A549 (cell line): ENCODE measurements at regions of chr14 and their contacts with region 1.

Region 1: GRCh38 chr14:72516936-72517700 is 376.8 kb downstream of the DPF3 start:
- DNase-seq: peak in 1 of 2 experiments; percentile 68
- ATAC-seq: peak; percentile 52 to 85; a peak in 4 of 6 replicates
- H3K4me3 ChIP-seq: no peak overlapping the region
- H3K27ac ChIP-seq: no peak overlapping the region
- H3K4me1 ChIP-seq: no peaks in the 10 kb centered on the region
- CTCF ChIP-seq: peak; percentile 86
- EP300 ChIP-seq: no peak
- POLR2A ChIP-seq: no peak
- RAD21 ChIP-seq: peak; percentile 92 to 93

Region 2: GRCh38 chr14:72256056-72256455 is 261.1 kb before region 1 on chr14:
- CTCF ChIA-PET with region 1: no interaction called
- POLR2A ChIA-PET with region 1: no interaction called
- DNase-seq: no peak
- ATAC-seq: no peak
- H3K4me3 ChIP-seq: no peak overlapping the region
- H3K27ac ChIP-seq: no peak overlapping the region
- H3K4me1 ChIP-seq: no peaks in the 10 kb centered on the region
- CTCF ChIP-seq: no peak
- EP300 ChIP-seq: no peak
- POLR2A ChIP-seq: no peak
- RAD21 ChIP-seq: no peak

Region 3: DNA sequence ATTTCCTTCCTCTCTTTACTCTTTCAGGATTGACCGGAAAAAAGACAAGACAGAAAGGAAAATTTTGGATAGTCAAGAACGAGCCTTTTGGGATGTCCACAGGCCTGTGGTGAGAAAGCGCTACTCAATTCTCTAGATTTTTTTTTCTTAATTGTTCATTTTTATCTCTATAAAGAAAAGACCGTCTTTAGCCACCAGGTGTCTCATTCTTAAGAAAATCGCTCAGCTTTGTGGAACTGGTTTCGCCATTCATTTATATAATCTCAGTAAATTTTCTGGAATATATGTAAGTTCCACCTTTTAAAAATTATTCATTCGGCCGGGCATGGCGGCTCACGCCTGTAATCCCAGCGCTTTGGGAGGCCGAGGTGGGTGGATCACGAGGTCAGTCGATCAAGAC is 44.3 kb before region 1 on chr14:
- CTCF ChIA-PET with region 1: interaction called, 11 read pairs
- POLR2A ChIA-PET with region 1: no interaction called
- DNase-seq: peak in 1 of 2 experiments; percentile 19
- ATAC-seq: peak in 1 of 2 experiments; percentile 53; a peak in 3 of 6 replicates
- H3K4me3 ChIP-seq: no peak overlapping the region
- H3K27ac ChIP-seq: no peak overlapping the region
- H3K4me1 ChIP-seq: no peaks in the 10 kb centered on the region
- CTCF ChIP-seq: no peak
- EP300 ChIP-seq: no peak
- POLR2A ChIP-seq: no peak
- RAD21 ChIP-seq: no peak

Region 4: GRCh38 chr14:72503696-72504368 is 13.3 kb before region 1 on chr14:
- CTCF ChIA-PET with region 1: interaction called, 71 read pairs
- POLR2A ChIA-PET with region 1: no interaction called
- DNase-seq: no peak
- ATAC-seq: no peak
- H3K4me3 ChIP-seq: no peak overlapping the region
- H3K27ac ChIP-seq: no peak overlapping the region
- H3K4me1 ChIP-seq: no peaks in the 10 kb centered on the region
- CTCF ChIP-seq: no peak
- EP300 ChIP-seq: no peak
- POLR2A ChIP-seq: no peak
- RAD21 ChIP-seq: no peak

Region 5: DNA sequence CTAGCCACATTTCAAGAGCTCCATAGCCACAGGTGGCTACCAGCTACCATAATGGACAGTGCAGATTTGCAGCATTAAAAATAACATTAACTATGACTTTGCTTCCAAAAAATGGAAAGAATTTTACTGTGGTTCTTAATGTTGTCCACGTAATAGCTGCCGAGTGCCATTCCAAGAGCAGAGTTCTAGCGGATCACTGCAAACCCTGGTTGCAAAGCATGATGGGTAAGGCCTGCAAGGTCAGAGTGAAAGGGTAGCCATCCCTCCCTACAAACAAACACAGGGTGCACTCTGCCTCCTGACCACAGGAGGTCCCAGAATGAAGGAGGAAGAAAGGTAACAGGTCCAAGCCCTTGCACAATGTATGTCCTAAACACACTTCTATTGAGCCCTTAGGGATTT is 219.2 kb after region 1 on chr14:
- CTCF ChIA-PET with region 1: no interaction called
- POLR2A ChIA-PET with region 1: no interaction called
- DNase-seq: peak in 1 of 2 experiments; percentile 31
- ATAC-seq: peak in 1 of 2 experiments; percentile 65; a peak in 3 of 6 replicates
- H3K4me3 ChIP-seq: no peak overlapping the region
- H3K27ac ChIP-seq: no peak overlapping the region
- H3K4me1 ChIP-seq: no peaks in the 10 kb centered on the region
- CTCF ChIP-seq: no peak
- EP300 ChIP-seq: no peak
- POLR2A ChIP-seq: no peak
- RAD21 ChIP-seq: no peak

Region 6: DNA sequence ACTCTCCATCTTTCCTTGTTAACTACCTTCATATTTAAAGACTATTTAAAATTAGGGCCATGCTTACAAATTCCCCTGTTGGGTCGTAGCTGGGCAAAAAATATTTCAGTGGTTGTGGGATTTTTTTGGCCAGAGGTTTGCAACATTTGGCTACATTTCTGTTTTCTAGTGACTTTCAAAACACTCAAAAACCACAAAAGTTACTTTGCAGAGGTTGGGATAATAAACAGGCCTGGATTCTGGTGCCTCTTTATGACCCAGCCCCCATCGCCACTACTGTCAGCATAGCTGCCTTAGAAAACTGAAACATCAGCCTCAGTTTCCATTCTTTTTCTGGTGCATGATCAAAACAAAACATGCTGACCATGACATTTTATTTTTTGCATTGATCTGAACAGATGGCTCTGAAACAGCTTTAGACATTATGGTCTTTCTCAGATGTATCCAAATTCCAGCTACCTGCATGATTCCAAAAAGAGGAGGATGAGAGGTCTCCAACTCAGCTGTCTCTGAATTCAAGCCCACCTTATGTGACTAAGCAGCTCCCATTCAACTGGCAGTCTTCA is 371.6 kb after region 1 on chr14:
- CTCF ChIA-PET with region 1: interaction called, 41 read pairs
- POLR2A ChIA-PET with region 1: interaction called, 3 read pairs
- DNase-seq: no peak
- ATAC-seq: no peak
- H3K4me3 ChIP-seq: no peak overlapping the region
- H3K27ac ChIP-seq: no peak overlapping the region
- H3K4me1 ChIP-seq: peaks cover 8% of the 10 kb centered on the region; the same call in 2 of the 3 replicates
- CTCF ChIP-seq: no peak
- EP300 ChIP-seq: no peak
- POLR2A ChIP-seq: no peak
- RAD21 ChIP-seq: no peak

Region 7: GRCh38 chr14:72916177-72916576 is 399.1 kb after region 1 on chr14:
- CTCF ChIA-PET with region 1: interaction called, 13 read pairs
- POLR2A ChIA-PET with region 1: interaction called, 3 read pairs
- DNase-seq: peak in 1 of 2 experiments; percentile 25
- ATAC-seq: peak in 1 of 2 experiments; percentile 65; a peak in 3 of 6 replicates
- H3K4me3 ChIP-seq: no peak overlapping the region
- H3K27ac ChIP-seq: no peak overlapping the region
- H3K4me1 ChIP-seq: peaks cover 8% of the 10 kb centered on the region; the same call in 1 of the 3 replicates
- CTCF ChIP-seq: no peak
- EP300 ChIP-seq: no peak
- POLR2A ChIP-seq: no peak
- RAD21 ChIP-seq: no peak

Region 8: DNA sequence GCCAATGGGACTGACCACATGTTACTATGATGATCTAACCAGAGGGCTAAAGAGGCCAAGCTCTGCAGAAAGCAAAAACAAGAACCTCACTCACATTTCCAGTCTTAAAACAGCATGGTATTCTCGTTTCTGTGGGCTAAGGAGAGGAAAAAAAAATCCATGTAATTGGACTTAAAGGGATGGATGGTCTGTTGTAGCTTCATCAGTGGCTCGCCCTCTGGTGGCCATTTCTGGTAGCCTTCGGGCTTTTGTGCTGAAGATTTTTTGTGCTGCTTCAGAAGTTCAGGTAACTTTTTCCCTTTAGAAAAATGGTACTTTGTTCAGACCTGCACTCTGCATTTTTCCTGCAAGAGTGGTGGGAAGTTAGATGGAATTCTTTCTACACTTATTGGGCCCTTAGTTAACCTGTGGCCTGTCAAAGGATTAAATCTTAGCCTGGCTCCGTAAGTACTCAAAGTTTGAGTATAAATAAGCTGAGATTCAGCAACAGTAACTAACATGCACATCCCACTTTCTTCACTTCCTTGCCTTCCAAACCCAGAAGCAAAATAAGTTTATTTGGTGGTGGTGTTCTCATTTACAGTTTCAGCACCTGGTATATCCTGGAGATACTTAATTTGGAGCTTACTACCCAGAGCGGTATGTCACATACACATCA is 431.5 kb after region 1 on chr14:
- CTCF ChIA-PET with region 1: interaction called, 201 read pairs
- POLR2A ChIA-PET with region 1: interaction called, 6 read pairs
- DNase-seq: peak; percentile 50 to 58
- ATAC-seq: peak; percentile 50 to 79; a peak in 3 of 6 replicates
- H3K4me3 ChIP-seq: no peak overlapping the region
- H3K27ac ChIP-seq: no peak overlapping the region
- H3K4me1 ChIP-seq: no peaks in the 10 kb centered on the region
- CTCF ChIP-seq: peak; percentile 86
- EP300 ChIP-seq: no peak
- POLR2A ChIP-seq: no peak
- RAD21 ChIP-seq: peak; percentile 62 to 67